Activated naive CD4-positive, alpha-beta T cell treated with anti-CD3 and anti-CD28 coated beads, Interleukin-2, amount 10 ng/mL, durations not matched to agents 7 days and 5 days (primary cell): ENCODE measurements at regions of chr7 and their contacts with region 1.

Region 1: DNA sequence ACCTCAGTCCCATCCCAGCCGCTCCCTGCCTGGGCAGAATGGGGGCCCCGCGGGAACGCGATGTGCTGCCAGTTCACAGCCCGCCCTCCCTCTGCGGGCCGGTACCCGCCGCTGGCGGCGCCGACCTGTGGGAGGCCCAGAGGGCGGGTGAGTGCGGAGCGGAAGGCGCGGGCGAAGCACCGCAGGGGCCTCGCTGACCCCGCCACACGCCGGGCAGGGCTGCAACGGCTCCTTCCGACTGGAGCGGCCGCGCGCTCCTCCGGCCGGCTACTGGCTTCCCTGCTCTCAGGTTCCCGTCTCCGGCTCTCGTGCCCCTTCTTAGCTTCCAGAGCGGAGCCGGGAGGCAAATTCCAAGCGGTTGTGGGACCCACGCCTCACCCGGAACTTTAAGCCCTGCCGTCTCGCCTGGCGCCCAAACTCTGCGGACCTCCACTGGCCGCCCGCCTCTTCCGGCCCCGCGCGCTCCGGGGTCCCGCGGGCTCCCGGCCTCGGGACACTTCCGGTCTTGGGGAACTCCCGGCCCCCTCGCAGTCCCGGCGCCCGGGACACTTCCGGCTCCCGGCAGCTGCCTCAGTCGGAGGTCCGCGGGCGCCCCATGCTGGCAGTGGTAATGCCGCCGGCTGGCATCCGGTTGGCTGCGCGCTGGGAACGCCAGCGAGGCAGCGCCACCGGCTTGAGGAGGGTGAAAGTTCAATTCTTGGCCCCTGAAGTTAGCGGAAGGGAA is at the start of gene CYREN:
- DNase-seq: peak; percentile 94
- H3K4me3 Mint-ChIP-seq: peak within 1 kb of the TSS; percentile 89
- H3K27ac Mint-ChIP-seq: peak within 1 kb of the TSS; percentile 94
- H3K4me1 Mint-ChIP-seq: peaks cover 52% of the 10 kb centered on the region
- H3K27me3 Mint-ChIP-seq: no peaks in the 10 kb centered on the region

Region 2: GRCh38 chr7:134905375-134905774 is 265.1 kb before region 1 on chr7:
- CTCF ChIA-PET with region 1: no interaction called
- DNase-seq: no peak
- H3K4me3 Mint-ChIP-seq: no peak overlapping the region
- H3K27ac Mint-ChIP-seq: no peak overlapping the region
- H3K4me1 Mint-ChIP-seq: peaks cover 12% of the 10 kb centered on the region
- H3K27me3 Mint-ChIP-seq: no peaks in the 10 kb centered on the region

Region 3: GRCh38 chr7:134948736-134949135 is 221.7 kb before region 1 on chr7:
- CTCF ChIA-PET with region 1: no interaction called
- DNase-seq: no peak
- H3K4me3 Mint-ChIP-seq: no peak overlapping the region
- H3K27ac Mint-ChIP-seq: no peak overlapping the region
- H3K4me1 Mint-ChIP-seq: peaks cover 17% of the 10 kb centered on the region
- H3K27me3 Mint-ChIP-seq: no peaks in the 10 kb centered on the region

Region 4: DNA sequence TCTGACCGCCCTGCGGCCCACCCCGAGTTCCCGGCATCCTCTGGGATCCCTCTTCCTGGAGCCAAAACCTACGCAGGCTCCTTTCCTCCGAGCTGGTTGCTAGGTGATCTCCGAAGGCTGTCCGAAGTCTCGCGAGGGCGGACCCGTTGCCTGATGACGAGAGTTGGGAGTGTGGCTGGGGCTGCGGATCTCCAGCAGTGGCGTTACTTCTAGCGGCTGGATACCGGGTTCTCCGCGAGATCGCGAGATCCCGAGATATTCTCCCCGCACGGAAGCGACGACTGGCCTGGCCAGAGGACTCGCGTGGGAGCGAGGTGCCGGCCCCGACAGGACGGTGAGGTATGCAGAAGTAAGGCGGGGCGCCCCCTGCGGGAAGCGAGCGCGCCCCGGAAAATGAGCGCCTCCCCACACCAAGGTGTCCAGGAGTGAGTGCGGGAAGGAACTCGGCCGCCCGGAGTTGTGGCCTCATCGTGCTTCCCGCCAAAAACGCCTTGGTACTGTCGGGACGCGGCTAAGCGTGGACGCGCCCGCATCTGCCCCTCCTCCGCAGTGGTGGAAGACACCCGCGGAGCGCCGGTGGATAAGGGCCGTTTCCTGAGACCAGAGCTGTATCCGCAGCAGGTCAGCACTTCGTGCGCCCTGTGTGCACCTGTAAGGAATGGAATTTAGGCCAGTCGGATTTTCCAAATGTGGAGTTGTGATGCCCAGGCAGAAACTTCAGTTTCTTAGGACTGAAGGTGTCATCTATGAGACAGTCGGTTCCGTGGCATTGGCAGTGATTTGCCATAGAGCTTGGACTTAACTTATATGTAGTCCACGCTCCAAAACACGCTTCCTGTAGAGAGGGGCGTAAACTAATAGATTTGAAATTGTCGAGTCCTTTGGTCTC is 183.8 kb before region 1 on chr7 and contains the start of gene AGBL3:
- CTCF ChIA-PET with region 1: interaction called, 36 read pairs
- DNase-seq: peak; percentile 96
- H3K4me3 Mint-ChIP-seq: peak within 1 kb of the TSS; percentile 95
- H3K27ac Mint-ChIP-seq: peak within 1 kb of the TSS; percentile 90
- H3K4me1 Mint-ChIP-seq: peaks cover 36% of the 10 kb centered on the region
- H3K27me3 Mint-ChIP-seq: peaks cover 5% of the 10 kb centered on the region

Region 5: GRCh38 chr7:135147899-135148721 is 22.3 kb before region 1 on chr7 and contains the start of gene TMEM140:
- CTCF ChIA-PET with region 1: interaction called, 59 read pairs
- DNase-seq: peak; percentile 77
- H3K4me3 Mint-ChIP-seq: peak within 1 kb of the TSS; percentile 80
- H3K27ac Mint-ChIP-seq: peak within 1 kb of the TSS; percentile 96
- H3K4me1 Mint-ChIP-seq: peaks cover 60% of the 10 kb centered on the region
- H3K27me3 Mint-ChIP-seq: no peaks in the 10 kb centered on the region

Region 6: DNA sequence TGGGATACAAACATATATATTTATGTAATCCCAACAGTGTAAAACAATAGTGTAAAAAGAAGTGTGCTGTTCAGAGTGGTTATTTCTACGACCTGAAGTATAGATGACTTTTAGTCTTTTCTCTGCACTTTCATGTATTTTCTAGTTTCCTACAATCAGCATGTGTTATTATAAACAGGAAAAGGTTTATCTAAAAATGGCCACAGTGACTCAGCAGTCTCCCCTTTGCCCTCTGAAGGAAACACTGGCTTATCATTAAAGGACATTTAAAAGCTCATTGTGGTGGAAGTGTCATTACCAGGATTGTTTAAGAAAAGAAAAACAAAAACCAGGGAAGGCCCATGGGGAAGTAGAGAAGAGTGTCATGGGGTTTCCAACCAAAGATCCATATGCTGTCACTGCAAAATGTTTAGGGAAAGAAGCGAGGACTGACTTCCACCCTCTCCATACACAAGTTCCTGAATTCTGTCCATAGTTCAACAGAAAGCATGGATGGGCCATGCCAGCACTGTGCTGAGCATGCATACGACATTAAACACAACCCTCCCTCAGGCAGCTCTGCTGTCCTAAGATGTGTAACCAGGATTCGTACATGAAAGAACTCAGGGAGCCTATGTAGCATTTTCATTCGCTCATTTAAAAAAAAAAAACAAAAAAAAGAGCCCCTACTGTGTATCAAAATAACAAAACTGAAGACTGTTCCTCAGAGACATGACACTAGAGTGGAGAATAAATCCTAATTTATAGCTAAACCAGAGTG is 10.2 kb before region 1 on chr7:
- CTCF ChIA-PET with region 1: interaction called, 25 read pairs
- DNase-seq: no peak
- H3K4me3 Mint-ChIP-seq: no peak overlapping the region
- H3K27ac Mint-ChIP-seq: peak overlapping the region; percentile 79
- H3K4me1 Mint-ChIP-seq: peaks cover 36% of the 10 kb centered on the region
- H3K27me3 Mint-ChIP-seq: no peaks in the 10 kb centered on the region